Upper lobe of right lung (tissue), 1 donor: ENCODE measurements at regions of chr4 and their contacts with region 1.

Region 1: DNA sequence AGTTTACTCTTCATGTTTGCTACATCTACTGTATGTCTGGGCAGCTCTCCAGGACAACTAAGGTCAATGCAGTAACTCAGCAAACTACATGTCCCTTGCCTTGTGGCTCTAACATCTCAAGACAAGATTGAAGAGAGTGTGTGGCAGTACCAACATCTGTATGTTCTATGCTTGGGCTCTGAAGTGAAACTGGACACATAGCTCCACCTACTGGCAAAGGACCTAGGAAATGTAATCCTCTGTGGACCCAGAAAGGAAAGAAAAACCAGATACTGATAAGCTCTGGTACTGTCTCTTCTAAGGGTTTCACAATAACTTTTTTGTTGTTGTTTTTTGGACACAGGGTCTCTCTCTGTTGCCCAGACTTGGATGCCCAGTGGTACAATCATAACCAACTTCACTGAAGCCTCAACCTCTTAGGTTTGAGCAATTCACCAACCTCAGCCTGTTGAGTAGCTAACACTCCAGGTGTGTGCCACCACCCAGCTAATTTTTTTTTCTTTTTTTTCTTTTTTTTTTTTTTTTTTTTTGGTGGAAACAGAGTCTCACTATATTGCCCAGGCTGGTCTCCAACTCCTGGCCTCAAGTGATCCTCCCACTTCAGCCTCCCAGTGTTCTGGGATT is 64.1 kb downstream of the QDPR start:
- DNase-seq: no peak
- ATAC-seq: peak; percentile 90
- H3K4me3 ChIP-seq: no peak overlapping the region
- H3K27ac ChIP-seq: no peak overlapping the region
- H3K4me1 ChIP-seq: no peaks in the 10 kb centered on the region
- H3K27me3 ChIP-seq: no peaks in the 10 kb centered on the region
- CTCF ChIP-seq: peak; percentile 72

Region 2: DNA sequence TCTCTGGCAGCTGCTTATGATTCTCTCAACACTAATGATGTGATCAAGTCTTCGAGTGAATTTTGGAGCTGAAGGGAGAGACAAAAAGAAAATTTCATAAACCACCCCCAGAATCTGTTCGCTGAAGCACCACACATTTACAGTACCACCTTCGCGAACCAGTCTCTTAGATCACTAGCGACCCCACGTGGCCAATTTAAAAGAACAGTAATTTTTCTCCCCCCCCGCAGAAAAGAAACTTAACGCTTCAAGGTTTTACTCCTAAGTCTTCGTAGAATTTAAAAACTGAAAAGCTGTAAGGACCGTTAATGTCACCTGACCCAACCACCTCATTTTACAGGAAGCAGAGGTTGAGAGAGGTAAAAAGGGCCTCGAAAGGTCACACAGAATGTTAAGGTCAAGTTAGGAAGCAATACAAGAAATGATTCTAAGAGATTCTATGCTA is 123.4 kb before region 1 on chr4:
- intact Hi-C with region 1: no loop called
- DNase-seq: no peak
- ATAC-seq: peak; percentile 58
- H3K4me3 ChIP-seq: no peak overlapping the region
- H3K27ac ChIP-seq: no peak overlapping the region
- H3K4me1 ChIP-seq: peaks cover 27% of the 10 kb centered on the region
- H3K27me3 ChIP-seq: no peaks in the 10 kb centered on the region
- CTCF ChIP-seq: peak; percentile 61

Region 3: DNA sequence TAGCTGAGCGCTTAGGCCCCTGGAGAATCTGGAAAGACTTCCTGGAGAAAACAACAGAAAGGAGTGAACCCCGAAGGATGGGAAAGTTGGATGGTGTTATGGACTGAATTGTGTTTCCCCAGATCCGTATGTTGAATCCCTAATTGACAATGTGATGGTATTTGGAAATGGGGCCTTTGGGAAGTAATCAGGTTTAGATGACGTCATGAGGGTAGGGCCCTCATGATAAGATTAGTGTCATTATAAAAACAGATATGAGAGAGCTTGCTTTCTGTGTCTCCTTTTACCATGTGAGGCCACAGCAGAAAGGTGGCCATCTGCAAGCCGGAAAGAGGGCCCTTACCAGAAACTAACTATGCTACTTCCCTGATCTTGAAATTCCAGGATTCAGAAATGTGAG is 95.4 kb before region 1 on chr4:
- intact Hi-C with region 1: loop called (anchors 5 kb)
- DNase-seq: no peak
- ATAC-seq: no peak
- H3K4me3 ChIP-seq: no peak overlapping the region
- H3K27ac ChIP-seq: no peak overlapping the region
- H3K4me1 ChIP-seq: no peaks in the 10 kb centered on the region
- H3K27me3 ChIP-seq: no peaks in the 10 kb centered on the region
- CTCF ChIP-seq: no peak